ENCODE measurements at regions of chr5 and their contacts with region 1.

Region 1: DNA sequence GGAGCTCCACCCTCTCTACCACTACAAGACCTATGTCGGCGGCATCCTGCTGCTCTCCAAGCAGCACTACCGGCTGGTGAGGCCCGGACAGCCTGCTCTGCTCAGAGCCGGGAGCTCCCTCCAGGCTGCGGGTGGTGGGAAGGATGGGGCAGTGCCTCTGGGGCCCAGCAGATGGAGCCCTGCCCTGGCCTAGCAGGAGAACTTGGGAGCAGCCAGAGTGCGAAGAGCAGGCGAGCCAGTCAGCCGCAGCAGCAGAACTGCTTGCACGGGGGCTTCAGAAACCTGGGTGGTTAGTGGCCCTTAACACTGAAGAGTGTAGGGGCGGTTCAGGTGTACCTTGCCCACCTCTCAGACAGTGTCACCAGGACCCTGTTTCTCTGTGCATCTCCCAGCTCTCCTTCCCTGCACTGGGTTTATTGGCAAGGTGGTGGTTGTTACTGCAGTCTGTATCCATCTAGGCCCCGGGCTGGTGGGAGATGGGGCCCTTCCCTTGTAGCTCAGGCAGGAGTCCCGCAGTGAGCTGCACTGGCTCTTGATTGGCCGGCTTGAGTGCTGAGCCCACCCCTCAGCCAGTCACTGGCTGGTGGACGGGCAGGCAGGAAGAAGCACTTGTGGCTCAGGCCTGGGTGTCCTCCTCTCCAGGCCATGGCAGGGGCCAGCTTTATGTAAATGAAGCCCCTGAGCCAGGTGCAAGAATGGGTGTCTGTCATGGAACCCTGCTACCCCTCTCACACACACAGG is 7.7 kb downstream of the B4GALT7 start:
- DNase-seq: peak; percentile 67
- H3K4me3 ChIP-seq: no peak overlapping the region
- H3K27ac ChIP-seq: no peak overlapping the region
- H3K4me1 ChIP-seq: peaks cover 4% of the 10 kb centered on the region
- H3K27me3 ChIP-seq: no peaks in the 10 kb centered on the region
- CTCF ChIP-seq: peak; percentile 89 to 92

Region 2: DNA sequence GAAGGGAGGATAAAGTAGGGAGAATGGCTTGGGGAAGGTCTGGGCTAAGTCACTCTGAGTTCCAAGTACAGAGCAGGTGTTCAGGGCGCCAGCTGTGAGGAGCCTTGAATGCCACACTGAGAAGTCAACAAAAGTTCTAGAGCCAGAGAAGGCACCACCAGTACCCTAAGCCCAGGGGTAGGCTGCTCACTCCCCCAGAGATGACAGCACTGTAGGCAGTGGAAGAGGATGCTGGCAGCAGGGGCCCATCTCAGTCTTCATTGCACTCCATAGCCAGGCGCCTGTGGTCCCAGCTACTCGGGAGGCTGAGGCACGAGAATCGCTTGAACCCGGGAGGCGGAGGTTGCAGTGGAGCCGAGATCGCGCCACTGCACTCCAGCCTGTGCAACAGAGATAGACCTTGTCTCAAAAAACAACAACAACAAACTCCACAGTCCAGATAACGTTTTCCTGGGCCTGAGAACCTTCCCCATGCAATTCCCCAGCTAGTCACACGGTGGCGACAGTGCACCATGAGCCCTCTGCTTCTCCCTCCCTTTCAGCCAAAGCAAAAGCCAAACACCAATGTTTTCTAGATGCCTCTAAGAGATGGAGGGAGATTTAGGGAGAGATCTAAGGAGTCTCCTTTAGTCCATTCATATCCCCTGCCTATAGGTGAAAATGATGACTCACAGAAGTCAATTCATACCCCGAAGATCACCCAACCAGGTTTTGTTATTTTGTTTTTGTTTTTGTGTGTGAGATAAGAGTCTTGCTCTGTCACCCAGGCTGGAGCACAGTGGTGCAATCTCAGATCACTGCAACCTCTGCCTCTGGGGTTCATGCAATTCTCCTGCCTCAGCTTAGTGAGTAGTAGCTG is 493.8 kb before region 1 on chr5:
- CTCF ChIA-PET with region 1: no interaction called
- dilution Hi-C with region 1: no loop called
- in situ Hi-C with region 1: no loop called
- intact Hi-C with region 1: no loop called
- DNase-seq: peak; percentile 45
- H3K4me3 ChIP-seq: no peak overlapping the region
- H3K27ac ChIP-seq: no peak overlapping the region
- H3K4me1 ChIP-seq: peaks cover 4% of the 10 kb centered on the region
- H3K27me3 ChIP-seq: no peaks in the 10 kb centered on the region
- CTCF ChIP-seq: peak; percentile 99 to 100

Region 3: DNA sequence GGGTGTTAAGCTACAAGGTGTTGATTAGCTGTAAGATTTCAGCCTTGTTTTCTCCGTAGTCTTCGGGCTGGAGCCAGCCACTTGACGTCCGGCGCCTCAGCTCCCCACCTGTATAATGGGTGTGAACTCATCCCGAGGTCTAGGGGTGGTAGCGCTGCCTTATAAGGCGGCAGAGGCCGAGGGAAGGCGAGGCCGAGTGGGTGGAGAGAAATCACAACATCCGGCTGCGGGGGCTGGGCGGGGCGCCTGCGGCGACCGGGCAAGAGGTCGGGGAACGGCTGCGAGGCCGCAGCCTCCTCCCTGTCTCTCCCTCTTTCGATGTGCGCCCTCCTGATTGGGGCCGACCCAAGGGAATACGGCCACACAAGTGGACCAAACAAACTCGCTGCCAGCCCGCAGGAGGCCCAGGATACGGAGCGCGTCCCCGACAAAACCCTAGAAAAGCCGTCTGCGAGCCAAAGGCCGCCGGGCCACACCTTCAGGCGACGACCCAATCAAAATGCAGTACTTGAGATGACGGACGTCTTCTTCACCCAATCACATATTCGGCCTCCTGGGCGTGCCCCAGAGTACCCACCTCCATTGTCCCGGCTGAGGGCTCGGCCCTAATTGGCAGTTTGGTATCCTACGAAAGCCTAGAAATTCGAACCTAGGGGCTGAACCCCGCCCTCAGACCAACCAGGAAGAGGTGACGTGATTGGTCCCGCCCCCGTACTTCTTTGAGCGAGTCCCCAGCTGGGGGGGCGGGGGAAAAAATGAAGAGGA is 181.6 kb before region 1 on chr5:
- CTCF ChIA-PET with region 1: interaction called, 11 read pairs
- dilution Hi-C with region 1: no loop called
- in situ Hi-C with region 1: no loop called
- intact Hi-C with region 1: no loop called
- DNase-seq: peak; percentile 100
- H3K4me3 ChIP-seq: peak overlapping the region; percentile 51 to 68 (median 54)
- H3K27ac ChIP-seq: peak overlapping the region; percentile 71
- H3K4me1 ChIP-seq: peaks cover 31% of the 10 kb centered on the region
- H3K27me3 ChIP-seq: no peaks in the 10 kb centered on the region
- CTCF ChIP-seq: no peak

Region 4: GRCh38 chr5:177554474-177555111 is 53.0 kb before region 1 on chr5 and contains the start of gene FAM193B:
- CTCF ChIA-PET with region 1: no interaction called
- dilution Hi-C with region 1: no loop called
- in situ Hi-C with region 1: no loop called
- intact Hi-C with region 1: no loop called
- DNase-seq: peak; percentile 86
- H3K4me3 ChIP-seq: peak within 1 kb of the TSS; percentile 80 to 96 (median 84)
- H3K27ac ChIP-seq: peak within 1 kb of the TSS; percentile 25
- H3K4me1 ChIP-seq: peaks cover 15% of the 10 kb centered on the region
- H3K27me3 ChIP-seq: no peaks in the 10 kb centered on the region
- CTCF ChIP-seq: peak; percentile 16 to 41
- total RNA-seq, gene FAM193B: 30.7 to 63.3 TPM

Region 5: GRCh38 chr5:178063277-178063676 is 455.7 kb after region 1 on chr5:
- CTCF ChIA-PET with region 1: no interaction called
- dilution Hi-C with region 1: no loop called
- in situ Hi-C with region 1: loop called (anchors 25 kb)
- intact Hi-C with region 1: loop called (anchors 5 kb)
- DNase-seq: no peak
- H3K4me3 ChIP-seq: no peak overlapping the region
- H3K27ac ChIP-seq: no peak overlapping the region
- H3K4me1 ChIP-seq: no peaks in the 10 kb centered on the region
- H3K27me3 ChIP-seq: peaks cover 1% of the 10 kb centered on the region
- CTCF ChIP-seq: no peak